A673 (cell line): ENCODE measurements at regions of chr11 and their contacts with region 1.

Region 1: GRCh38 chr11:36492724-36493304 is 17.3 kb downstream of the TRAF6 start:
- DNase-seq: peak; percentile 86
- H3K4me3 ChIP-seq: no peak overlapping the region
- H3K27ac ChIP-seq: no peak overlapping the region
- H3K4me1 ChIP-seq: peaks cover 11% of the 10 kb centered on the region
- H3K27me3 ChIP-seq: no peaks in the 10 kb centered on the region
- CTCF ChIP-seq: peak; percentile 100

Region 2: GRCh38 chr11:36212564-36213392 is 280.0 kb before region 1 on chr11:
- CTCF ChIA-PET with region 1: no interaction called
- POLR2A ChIA-PET with region 1: no interaction called
- intact Hi-C with region 1: no loop called
- DNase-seq: peak; percentile 54
- H3K4me3 ChIP-seq: no peak overlapping the region
- H3K27ac ChIP-seq: no peak overlapping the region
- H3K4me1 ChIP-seq: no peaks in the 10 kb centered on the region
- H3K27me3 ChIP-seq: no peaks in the 10 kb centered on the region
- CTCF ChIP-seq: no peak

Region 3: DNA sequence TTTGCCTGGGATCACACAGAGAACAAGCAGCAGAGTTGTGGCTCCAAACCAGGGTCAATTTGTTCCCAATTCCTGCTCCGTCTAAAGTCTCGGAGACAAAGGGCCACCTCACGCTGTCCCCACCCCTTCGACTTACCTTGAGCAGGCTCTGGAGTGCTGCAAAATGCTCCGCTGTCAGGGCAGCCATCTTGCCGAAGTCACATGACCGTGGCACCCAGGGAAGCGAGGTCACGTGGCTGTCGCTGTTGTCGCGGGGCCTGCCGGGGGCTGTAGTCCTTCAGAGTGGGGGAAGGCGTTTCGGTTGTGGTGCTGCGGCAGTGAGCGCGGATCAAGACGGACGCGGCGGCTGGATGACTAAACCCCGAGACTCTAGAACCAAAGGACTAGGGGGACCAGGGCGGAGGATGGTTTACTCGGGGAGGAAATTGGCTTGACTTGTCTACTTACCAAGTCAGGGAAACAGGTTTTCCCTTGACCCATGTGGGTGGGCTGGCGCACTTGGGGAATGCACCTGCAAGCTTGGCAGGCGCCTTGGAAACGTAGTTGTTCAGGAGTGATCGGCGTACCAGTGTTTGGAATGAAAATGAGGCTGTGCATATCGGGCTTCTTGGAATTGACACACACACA is 203.5 kb before region 1 on chr11 and contains the start of gene COMMD9:
- CTCF ChIA-PET with region 1: interaction called, 24 read pairs
- POLR2A ChIA-PET with region 1: interaction called, 4 read pairs
- intact Hi-C with region 1: loop called (anchors 1 kb)
- DNase-seq: peak; percentile 100
- H3K4me3 ChIP-seq: peak within 1 kb of the TSS; percentile 61
- H3K27ac ChIP-seq: peak within 1 kb of the TSS; percentile 39
- H3K4me1 ChIP-seq: peaks cover 17% of the 10 kb centered on the region
- H3K27me3 ChIP-seq: no peaks in the 10 kb centered on the region
- CTCF ChIP-seq: no peak
- total RNA-seq, gene COMMD9: 147 and 154 TPM in 2 replicates

Region 4: DNA sequence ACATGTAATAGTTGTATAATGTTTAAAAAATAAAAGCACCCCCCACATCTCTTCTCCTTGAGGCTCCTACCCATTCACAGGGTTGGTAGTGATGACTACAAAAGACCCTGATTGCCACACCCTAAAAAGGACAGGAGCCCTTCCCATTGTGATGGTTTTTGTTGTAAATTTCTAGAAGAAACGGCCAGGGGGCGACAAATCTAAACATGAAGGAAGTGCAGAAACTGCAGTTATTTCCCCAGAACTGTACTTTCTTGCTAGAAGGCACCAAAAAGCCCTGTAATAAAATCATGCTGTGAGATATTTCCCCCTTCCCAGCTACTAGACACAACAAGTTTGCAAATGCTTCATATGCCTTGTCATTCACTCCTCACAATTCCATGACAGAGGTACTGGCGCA is 185.9 kb before region 1 on chr11:
- CTCF ChIA-PET with region 1: interaction called, 3 read pairs
- POLR2A ChIA-PET with region 1: no interaction called
- intact Hi-C with region 1: loop called (anchors 5 kb)
- DNase-seq: peak; percentile 91
- H3K4me3 ChIP-seq: no peak overlapping the region
- H3K27ac ChIP-seq: no peak overlapping the region
- H3K4me1 ChIP-seq: peaks cover 4% of the 10 kb centered on the region
- H3K27me3 ChIP-seq: no peaks in the 10 kb centered on the region
- CTCF ChIP-seq: peak; percentile 91

Region 5: DNA sequence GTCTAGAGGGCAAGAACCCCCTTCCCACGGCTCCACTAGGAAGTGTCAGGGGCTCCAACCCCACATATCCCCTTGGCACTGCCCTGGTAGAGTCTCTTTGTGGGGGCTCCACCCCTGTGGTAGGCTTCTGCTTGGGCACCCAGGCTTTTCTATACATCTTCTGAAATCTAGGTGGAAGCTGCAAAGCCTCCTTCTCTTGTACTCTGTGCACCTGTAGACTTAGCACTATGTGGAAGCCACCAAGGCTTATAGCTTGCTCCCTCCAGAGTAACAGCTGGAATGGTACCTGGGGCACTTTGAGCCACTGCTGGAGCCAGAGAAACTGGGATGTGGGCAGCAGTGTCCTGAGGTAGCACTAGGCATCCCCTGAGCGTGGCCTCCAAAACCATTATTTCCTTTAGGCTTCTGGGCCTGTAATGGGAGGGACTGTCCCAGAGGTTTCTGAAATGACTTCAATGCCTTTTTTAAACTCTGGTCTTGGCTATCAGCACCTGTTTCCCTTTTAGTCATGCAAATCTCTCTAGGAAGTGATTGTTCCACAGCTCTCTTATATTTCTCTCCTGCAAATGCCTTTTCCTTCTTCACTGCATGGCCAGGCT is 51.1 kb before region 1 on chr11:
- CTCF ChIA-PET with region 1: no interaction called
- POLR2A ChIA-PET with region 1: no interaction called
- intact Hi-C with region 1: no loop called
- DNase-seq: no peak
- H3K4me3 ChIP-seq: no peak overlapping the region
- H3K27ac ChIP-seq: no peak overlapping the region
- H3K4me1 ChIP-seq: no peaks in the 10 kb centered on the region
- H3K27me3 ChIP-seq: no peaks in the 10 kb centered on the region
- CTCF ChIP-seq: no peak

Region 6: DNA sequence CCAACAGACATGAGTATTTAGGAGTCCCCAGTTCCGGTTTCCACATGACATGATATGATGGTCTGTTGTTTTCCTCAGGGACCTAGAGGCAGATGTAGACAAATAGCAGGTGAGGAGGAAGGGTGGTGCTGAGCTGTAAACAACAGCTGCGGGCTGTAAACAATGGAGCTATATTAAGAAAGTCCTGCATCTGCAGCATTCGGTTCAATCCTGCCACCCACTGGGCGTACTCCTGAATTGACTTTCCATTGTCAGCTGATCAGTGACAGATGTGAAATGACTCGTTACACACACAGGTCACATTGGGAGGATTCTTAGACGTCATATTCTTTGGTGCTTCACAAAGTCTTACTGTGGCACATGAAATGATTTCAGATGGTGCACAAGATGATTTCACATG is 48.2 kb after region 1 on chr11:
- CTCF ChIA-PET with region 1: interaction called, 10 read pairs
- POLR2A ChIA-PET with region 1: no interaction called
- intact Hi-C with region 1: no loop called
- DNase-seq: peak; percentile 84
- H3K4me3 ChIP-seq: no peak overlapping the region
- H3K27ac ChIP-seq: no peak overlapping the region
- H3K4me1 ChIP-seq: no peaks in the 10 kb centered on the region
- H3K27me3 ChIP-seq: peaks cover 20% of the 10 kb centered on the region
- CTCF ChIP-seq: peak; percentile 76